Colonic mucosa (tissue), 4 donors: ENCODE measurements at regions of chr2 and their contacts with region 1.

Region 1: GRCh38 chr2:10122386-10123280 is at the start of gene RRM2:
- DNase-seq: peak; percentile 96
- H3K4me3 ChIP-seq: peak within 1 kb of the TSS; percentile 84
- H3K27ac ChIP-seq: peak within 1 kb of the TSS; percentile 83
- H3K4me1 ChIP-seq: peaks cover 34% of the 10 kb centered on the region
- H3K27me3 ChIP-seq: no peaks in the 10 kb centered on the region
- CTCF ChIP-seq: no peak
- total RNA-seq, gene RRM2: 54.3 to 216 TPM

Region 2: GRCh38 chr2:10659898-10660568 is 537.4 kb after region 1 on chr2:
- intact Hi-C with region 1: loop called (anchors 10 kb)
- DNase-seq: peak; percentile 62
- H3K4me3 ChIP-seq: no peak overlapping the region
- H3K27ac ChIP-seq: no peak overlapping the region
- H3K4me1 ChIP-seq: no peaks in the 10 kb centered on the region
- H3K27me3 ChIP-seq: no peaks in the 10 kb centered on the region
- CTCF ChIP-seq: peak; percentile 88